Heart right ventricle (tissue), 16 donors: ENCODE measurements at regions of chr11 and their contacts with region 1.

Region 1: GRCh38 chr11:67482825-67483798 is at the start of gene AIP:
- DNase-seq: peak; percentile 97 to 98
- ATAC-seq: peak; percentile 98 to 99 (median 98)
- H3K4me3 ChIP-seq: peak within 1 kb of the TSS; percentile 29 to 66 (median 55)
- H3K27ac ChIP-seq: peak within 1 kb of the TSS; percentile 67 to 93 (median 84)
- H3K4me1 ChIP-seq: peaks cover 8 to 48% (median 23%) of the 10 kb centered on the region in 9 donors
- H3K27me3 ChIP-seq: peaks cover 0 to 6% (median 0%) of the 10 kb centered on the region in 7 donors
- CTCF ChIP-seq: peak in 5 of 9 donors; percentile 20 to 38 (median 33)
- total RNA-seq, gene AIP: 37.5 to 63.0 (median 49.8) TPM

Region 2: DNA sequence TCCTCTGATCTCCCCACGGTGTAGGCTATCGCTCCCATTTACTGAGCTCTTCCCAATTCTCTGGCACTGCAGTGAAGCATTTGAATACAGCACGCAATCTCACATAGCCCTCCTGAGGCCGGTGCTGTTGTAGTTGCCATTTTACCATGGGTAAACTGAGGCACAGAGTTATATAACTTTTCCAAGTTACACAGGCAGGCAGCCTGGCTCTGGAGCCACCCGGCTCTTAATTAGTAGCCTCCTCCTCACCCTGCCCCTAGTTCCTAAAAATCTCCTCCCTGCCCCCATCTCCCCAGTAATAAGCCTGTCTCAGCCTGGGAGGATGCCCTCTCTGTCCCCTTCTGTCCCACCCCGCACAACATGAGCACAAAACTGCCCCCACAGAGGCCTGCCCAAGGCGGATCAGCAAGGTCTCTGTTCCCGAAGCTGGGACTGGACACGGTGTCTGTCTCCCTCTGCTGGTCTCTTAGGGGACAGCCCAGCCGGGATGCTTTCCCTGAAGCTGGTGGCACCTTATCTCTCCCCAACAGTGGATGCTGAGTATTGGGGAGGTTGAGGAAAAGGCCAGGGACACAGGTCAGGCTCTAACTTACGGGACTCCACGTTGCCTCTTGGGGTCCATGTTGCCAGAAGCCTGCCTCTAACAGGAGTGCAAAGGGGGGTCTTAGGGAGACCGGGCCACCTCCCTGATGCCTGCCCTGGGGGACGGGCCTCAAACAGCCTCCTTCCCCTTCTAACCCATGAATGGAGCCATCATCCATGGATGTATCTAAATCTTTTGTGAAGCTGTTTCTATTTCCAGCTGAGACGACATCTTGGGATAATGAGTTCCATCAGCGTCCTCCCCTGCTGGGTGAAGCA is 100.6 kb before region 1 on chr11:
- intact Hi-C with region 1: no loop called
- DNase-seq: peak; percentile 81
- ATAC-seq: peak; percentile 76 to 91 (median 88)
- H3K4me3 ChIP-seq: no peak overlapping the region
- H3K27ac ChIP-seq: no peak overlapping the region
- H3K4me1 ChIP-seq: peaks cover 0 to 44% (median 4%) of the 10 kb centered on the region in 9 donors
- H3K27me3 ChIP-seq: peaks cover 0 to 7% (median 0%) of the 10 kb centered on the region in 7 donors
- CTCF ChIP-seq: peak; percentile 92 to 99 (median 96)

Region 3: DNA sequence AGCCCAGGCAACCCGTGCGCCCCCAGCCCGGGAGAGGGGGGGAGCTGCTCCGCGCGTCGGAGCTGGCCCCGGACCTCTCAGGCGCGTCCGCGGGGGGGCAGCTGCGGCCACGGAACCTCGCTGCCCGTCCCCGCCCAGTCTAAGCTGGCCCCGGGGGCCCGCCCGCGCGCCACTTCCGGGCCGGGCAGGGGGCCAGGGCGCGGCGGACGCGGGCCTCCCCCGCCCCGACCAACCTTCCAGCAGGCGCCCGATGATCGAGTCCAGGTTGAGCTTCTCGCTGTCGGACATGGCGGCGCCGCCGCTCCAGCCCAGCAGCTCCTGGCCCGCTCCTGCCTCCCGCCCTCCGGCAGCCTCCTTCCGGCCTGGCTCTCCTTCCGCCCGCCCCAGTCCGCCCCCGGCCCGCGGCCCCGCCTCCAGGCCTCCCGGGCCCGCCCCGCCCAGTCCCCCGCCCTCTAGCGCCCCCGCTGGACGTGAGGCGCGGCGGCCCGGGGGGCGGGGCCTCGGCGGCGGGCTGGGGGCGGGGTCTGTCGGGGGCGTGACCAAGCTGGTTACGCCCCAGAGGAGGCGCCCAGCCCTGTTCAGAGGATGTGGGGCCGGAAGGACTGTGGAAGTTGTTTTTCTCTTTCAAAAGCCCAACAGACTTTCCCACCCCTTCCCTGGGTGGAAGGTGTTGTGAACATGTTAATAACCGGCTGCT is 81.5 kb before region 1 on chr11 and contains the start of gene PPP1CA:
- intact Hi-C with region 1: loop called in 1 of 10 experiments (anchors 5 kb)
- DNase-seq: peak; percentile 90 to 94
- ATAC-seq: peak; percentile 76 to 95 (median 86)
- H3K4me3 ChIP-seq: peak within 1 kb of the TSS; percentile 68 to 99 (median 96)
- H3K27ac ChIP-seq: peak within 1 kb of the TSS; percentile 89 to 99 (median 97)
- H3K4me1 ChIP-seq: peaks cover 0 to 89% (median 54%) of the 10 kb centered on the region in 9 donors
- H3K27me3 ChIP-seq: no peaks in the 10 kb centered on the region
- CTCF ChIP-seq: peak; percentile 38 to 91 (median 62)
- total RNA-seq, gene PPP1CA: 92.0 to 143 (median 103) TPM